Spleen (tissue), 13 donors: ENCODE measurements at regions of chr18 and their contacts with region 1.

Region 1: GRCh38 chr18:77207540-77207939 is 42.1 kb upstream of the GALR1 start:
- DNase-seq: no peak
- H3K4me3 ChIP-seq: no peak overlapping the region
- H3K27ac ChIP-seq: peak overlapping the region in 7 of 8 donors; percentile 33 to 85 (median 76)
- H3K4me1 ChIP-seq: peaks cover 15 to 68% (median 46%) of the 10 kb centered on the region in 6 donors
- H3K27me3 ChIP-seq: no peaks in the 10 kb centered on the region
- CTCF ChIP-seq: peak in 10 of 11 experiments; percentile 25 to 77 (median 66)
- POLR2A ChIP-seq: no peak

Region 2: GRCh38 chr18:77000527-77000926 is 207.0 kb before region 1 on chr18:
- intact Hi-C with region 1: loop called (anchors 5 kb)
- DNase-seq: peak; percentile 89
- H3K4me3 ChIP-seq: peak overlapping the region in 1 of 8 donors; percentile 23
- H3K27ac ChIP-seq: peak overlapping the region in 1 of 8 donors; percentile 24
- H3K4me1 ChIP-seq: peaks cover 8 to 33% (median 22%) of the 10 kb centered on the region in 6 donors
- H3K27me3 ChIP-seq: no peaks in the 10 kb centered on the region
- CTCF ChIP-seq: peak; percentile 65 to 97 (median 90)
- POLR2A ChIP-seq: no peak

Region 3: GRCh38 chr18:77140439-77141109 is 67.0 kb before region 1 on chr18:
- intact Hi-C with region 1: loop called (anchors 5 kb)
- DNase-seq: no peak
- H3K4me3 ChIP-seq: no peak overlapping the region
- H3K27ac ChIP-seq: peak overlapping the region in 1 of 8 donors; percentile 7
- H3K4me1 ChIP-seq: peaks cover 3 to 19% (median 12%) of the 10 kb centered on the region in 6 donors
- H3K27me3 ChIP-seq: no peaks in the 10 kb centered on the region
- CTCF ChIP-seq: no peak
- POLR2A ChIP-seq: no peak

Region 4: DNA sequence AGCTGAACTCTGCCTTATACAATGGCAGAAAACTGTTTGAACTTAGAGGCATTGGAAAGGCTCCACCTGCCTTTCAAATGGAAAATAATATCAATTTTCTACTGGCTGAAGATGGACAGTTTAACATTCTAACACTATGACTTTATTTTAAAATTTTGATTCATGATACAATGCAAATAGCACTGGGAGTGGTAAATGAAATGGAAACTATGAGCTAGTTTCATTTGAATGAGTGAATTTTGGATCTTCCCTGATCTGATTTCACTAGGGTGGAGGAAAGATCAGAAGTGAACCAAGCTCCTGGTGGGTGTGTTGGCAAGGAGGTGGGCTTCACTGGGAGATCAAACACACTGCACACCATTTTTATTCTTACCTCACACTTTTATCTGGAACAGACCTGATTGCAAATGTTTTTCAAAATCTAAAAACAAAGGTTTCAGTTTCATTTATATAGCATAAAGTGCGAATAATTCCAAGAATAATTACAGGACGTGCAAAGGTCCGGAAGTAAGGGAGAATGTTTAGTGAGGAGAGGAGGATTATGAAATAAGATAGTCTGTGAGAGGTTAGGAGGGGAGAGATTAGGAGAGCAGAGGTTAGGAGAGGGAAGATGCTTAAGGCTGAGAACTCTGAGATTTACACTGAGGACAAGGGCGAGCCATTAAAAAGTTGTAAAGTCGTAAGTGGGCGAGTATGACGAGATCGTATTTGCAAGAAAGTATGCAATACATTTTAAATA is 56.3 kb before region 1 on chr18:
- intact Hi-C with region 1: no loop called
- DNase-seq: no peak
- H3K4me3 ChIP-seq: no peak overlapping the region
- H3K27ac ChIP-seq: no peak overlapping the region
- H3K4me1 ChIP-seq: peaks cover 0 to 33% (median 12%) of the 10 kb centered on the region in 6 donors
- H3K27me3 ChIP-seq: no peaks in the 10 kb centered on the region
- CTCF ChIP-seq: no peak
- POLR2A ChIP-seq: no peak

Region 5: GRCh38 chr18:77676905-77677304 is 469.4 kb after region 1 on chr18:
- intact Hi-C with region 1: no loop called
- DNase-seq: no peak
- H3K4me3 ChIP-seq: no peak overlapping the region
- H3K27ac ChIP-seq: no peak overlapping the region
- H3K4me1 ChIP-seq: no peaks in the 10 kb centered on the region
- H3K27me3 ChIP-seq: peaks cover 0 to 24% (median 0%) of the 10 kb centered on the region in 7 donors
- CTCF ChIP-seq: no peak
- POLR2A ChIP-seq: no peak